ENCODE measurements at regions of chr2 and their contacts with region 1.

Region 1: GRCh38 chr2:201064797-201065329 is 6.6 kb downstream of the HYCC2 start:
- DNase-seq: no peak
- H3K4me3 ChIP-seq: no peak overlapping the region
- H3K27ac ChIP-seq: no peak overlapping the region
- H3K4me1 ChIP-seq: peaks cover 16 to 33% (median 30%) of the 10 kb centered on the region in 4 donors
- H3K27me3 ChIP-seq: no peaks in the 10 kb centered on the region
- CTCF ChIP-seq: no peak
- EP300 ChIP-seq: no peak
- POLR2A ChIP-seq: no peak

Region 2: DNA sequence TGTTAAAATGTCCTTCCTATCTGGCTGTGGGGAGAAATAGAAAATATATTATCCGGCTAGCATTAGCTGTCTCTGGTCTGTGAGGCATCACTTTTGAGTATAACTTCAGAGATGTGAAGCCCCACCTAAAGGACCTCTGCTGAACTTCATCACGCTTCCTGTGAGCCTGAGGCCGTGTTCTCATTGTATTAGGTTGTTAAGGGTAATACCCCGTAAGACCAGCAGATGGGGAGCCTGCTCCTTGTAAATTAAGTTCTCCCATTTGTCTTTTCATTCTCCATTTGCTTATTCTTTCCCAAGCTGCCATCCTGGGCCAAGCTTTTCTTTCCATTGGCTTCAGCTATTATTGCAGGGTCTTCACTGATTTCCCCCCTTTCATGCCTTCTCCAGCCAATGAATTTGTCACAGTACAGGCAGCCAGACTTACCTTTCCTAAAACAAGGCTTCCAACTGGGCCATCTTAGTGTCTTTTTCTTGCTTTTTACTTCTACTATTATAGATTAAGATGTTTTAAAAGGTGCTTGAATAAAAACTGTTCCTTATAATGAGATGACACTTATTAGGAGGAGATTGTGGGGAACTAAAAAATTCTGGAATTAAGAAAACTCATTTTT is 163.3 kb before region 1 on chr2:
- intact Hi-C with region 1: loop called (anchors 2 kb)
- DNase-seq: no peak
- H3K4me3 ChIP-seq: no peak overlapping the region
- H3K27ac ChIP-seq: no peak overlapping the region
- H3K4me1 ChIP-seq: peaks cover 0 to 3% (median 0%) of the 10 kb centered on the region in 4 donors
- H3K27me3 ChIP-seq: no peaks in the 10 kb centered on the region
- CTCF ChIP-seq: peak; percentile 55 to 77 (median 75)
- EP300 ChIP-seq: no peak
- POLR2A ChIP-seq: no peak

Region 3: DNA sequence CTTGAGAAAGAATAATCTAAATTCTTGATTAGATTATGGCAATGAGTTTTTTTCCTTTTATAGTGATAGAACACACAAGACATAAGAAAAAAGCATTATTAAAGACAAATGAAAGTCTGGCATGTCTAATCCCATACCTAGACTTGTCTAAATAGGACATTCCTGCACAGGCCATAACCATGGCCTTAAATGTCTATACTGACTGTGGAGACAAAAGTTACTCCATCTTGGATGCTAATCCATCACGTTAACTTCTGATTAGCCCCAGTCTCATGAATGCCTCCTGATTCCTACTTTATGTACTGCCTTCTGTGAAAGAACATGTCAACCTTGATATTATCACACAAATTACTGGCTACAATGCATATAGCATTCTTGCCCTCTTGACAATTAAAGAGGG is 125.0 kb before region 1 on chr2:
- intact Hi-C with region 1: no loop called
- DNase-seq: no peak
- H3K4me3 ChIP-seq: no peak overlapping the region
- H3K27ac ChIP-seq: no peak overlapping the region
- H3K4me1 ChIP-seq: no peaks in the 10 kb centered on the region
- H3K27me3 ChIP-seq: no peaks in the 10 kb centered on the region
- CTCF ChIP-seq: no peak
- EP300 ChIP-seq: no peak
- POLR2A ChIP-seq: no peak

Region 4: DNA sequence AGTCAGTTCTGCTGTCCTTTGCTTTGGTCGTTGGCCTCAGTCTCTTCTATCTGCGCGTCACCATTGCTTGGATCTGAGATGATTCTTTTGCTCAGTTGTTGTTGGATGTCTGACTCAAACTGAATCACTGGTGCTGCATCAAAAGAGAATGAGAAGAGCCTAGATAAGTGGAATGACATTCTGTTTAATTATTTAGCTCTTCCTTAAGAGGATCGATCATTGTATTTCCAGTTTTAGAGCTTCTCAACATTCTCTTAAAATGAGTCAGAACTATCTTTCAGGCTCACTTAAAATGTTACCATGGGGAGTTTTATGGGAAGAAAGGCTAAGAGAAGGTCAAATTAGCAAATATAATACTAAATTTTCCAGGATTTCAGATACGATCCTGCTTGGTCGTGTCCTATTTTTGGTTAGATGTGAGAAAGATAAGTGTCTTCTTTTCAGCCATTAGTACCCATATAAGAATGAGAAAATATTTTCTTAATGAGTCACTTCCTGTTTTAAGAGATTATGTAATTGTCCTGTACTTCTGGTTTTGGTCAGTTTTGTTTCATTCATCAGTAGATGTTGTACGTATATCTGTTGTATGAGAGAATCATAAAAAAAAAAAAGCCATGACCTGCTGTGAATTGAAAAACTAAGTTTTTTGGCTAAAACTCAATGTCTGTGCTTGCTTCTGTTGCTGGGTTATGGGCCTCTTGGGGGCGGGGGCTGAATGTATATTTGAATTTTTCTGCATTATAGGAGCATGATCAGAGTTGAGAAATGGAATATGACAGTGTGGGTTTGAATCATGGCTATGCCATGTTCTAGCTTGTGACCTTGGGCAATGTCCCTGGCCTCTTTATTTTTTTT is 86.5 kb after region 1 on chr2:
- intact Hi-C with region 1: loop called (anchors 5 kb)
- DNase-seq: no peak
- H3K4me3 ChIP-seq: no peak overlapping the region
- H3K27ac ChIP-seq: peak overlapping the region; percentile 79 to 87 (median 82)
- H3K4me1 ChIP-seq: peaks cover 47 to 57% (median 56%) of the 10 kb centered on the region in 4 donors
- H3K27me3 ChIP-seq: no peaks in the 10 kb centered on the region
- CTCF ChIP-seq: no peak
- EP300 ChIP-seq: no peak
- POLR2A ChIP-seq: no peak

Measured in esophagus muscularis mucosa (tissue), 4 donors.